CD4-positive, alpha-beta memory T cell (primary cell): ENCODE measurements at regions of chr2 and their contacts with region 1.

Region 1: DNA sequence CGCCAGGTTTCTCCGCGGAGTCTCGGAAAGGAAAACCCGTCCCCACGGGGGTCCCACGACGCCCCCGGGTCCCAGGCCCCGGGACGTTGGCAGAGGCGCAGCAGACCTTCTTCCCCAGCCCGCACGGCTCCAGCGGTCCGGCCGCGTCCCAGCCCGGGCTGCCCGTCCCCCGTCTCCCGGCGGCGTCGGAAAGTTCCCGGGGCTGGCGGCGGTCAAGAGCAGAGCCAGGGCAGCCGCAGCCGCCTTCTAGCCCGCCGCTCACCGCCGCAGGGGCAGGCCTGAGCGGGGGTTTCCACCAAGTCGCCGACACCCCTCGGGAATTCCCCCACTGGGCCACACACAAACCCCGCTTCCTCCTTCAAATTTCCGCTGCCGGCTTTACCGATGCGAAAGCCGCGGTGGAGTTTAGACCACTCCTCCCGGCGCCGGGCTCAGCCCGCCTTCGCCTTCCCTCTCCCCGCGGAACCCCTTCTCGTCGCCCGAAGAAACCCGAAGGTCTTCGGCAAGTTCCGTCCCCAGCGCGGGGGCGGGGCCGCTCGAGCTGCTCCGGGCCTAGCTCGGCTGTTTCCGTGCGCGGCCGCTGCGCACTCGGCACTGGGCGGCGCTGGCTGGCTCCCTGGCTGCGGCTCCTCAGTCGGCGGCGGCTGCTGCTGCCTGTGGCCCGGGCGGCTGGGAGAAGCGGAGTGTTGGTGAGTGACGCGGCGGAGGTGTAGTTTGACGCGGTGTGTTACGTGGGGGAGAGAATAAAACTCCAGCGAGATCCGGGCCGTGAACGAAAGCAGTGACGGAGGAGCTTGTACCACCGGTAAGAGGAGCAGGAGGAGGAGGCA is at the start of gene CREB1:
- DNase-seq: peak; percentile 99 to 100 (median 100)
- H3K4me3 ChIP-seq: peak within 1 kb of the TSS; percentile 86 to 89
- H3K4me3 Mint-ChIP-seq: peak within 1 kb of the TSS; percentile 96 to 99 (median 98)
- H3K27ac ChIP-seq: peak within 1 kb of the TSS; percentile 99
- H3K27ac Mint-ChIP-seq: peak within 1 kb of the TSS; percentile 98 to 100 (median 100)
- H3K4me1 ChIP-seq: peaks cover 75% of the 10 kb centered on the region
- H3K4me1 Mint-ChIP-seq: peaks cover 47 to 94% (median 59%) of the 10 kb centered on the region in 4 donors
- H3K27me3 ChIP-seq: no peaks in the 10 kb centered on the region
- H3K27me3 Mint-ChIP-seq: peaks cover 0 to 3% of the 10 kb centered on the region in 2 donors
- total RNA-seq, gene CREB1: 128 TPM

Region 2: GRCh38 chr2:206085742-206086445 is 1443.7 kb before region 1 on chr2 and contains the start of gene INO80D:
- CTCF ChIA-PET with region 1: no interaction called
- POLR2A ChIA-PET with region 1: interaction called, 7 read pairs
- intact Hi-C with region 1: loop called (anchors 5 kb)
- DNase-seq: peak; percentile 88 to 91 (median 89)
- H3K4me3 ChIP-seq: peak within 1 kb of the TSS; percentile 81 to 94
- H3K4me3 Mint-ChIP-seq: peak within 1 kb of the TSS; percentile 98 to 100 (median 99)
- H3K27ac ChIP-seq: peak within 1 kb of the TSS; percentile 98
- H3K27ac Mint-ChIP-seq: peak within 1 kb of the TSS; percentile 99 to 100 (median 100)
- H3K4me1 ChIP-seq: peaks cover 44% of the 10 kb centered on the region
- H3K4me1 Mint-ChIP-seq: peaks cover 24 to 54% (median 37%) of the 10 kb centered on the region in 4 donors
- H3K27me3 ChIP-seq: no peaks in the 10 kb centered on the region
- H3K27me3 Mint-ChIP-seq: no peaks in the 10 kb centered on the region
- total RNA-seq, gene INO80D: 40.2 to 41.3 TPM

Region 3: DNA sequence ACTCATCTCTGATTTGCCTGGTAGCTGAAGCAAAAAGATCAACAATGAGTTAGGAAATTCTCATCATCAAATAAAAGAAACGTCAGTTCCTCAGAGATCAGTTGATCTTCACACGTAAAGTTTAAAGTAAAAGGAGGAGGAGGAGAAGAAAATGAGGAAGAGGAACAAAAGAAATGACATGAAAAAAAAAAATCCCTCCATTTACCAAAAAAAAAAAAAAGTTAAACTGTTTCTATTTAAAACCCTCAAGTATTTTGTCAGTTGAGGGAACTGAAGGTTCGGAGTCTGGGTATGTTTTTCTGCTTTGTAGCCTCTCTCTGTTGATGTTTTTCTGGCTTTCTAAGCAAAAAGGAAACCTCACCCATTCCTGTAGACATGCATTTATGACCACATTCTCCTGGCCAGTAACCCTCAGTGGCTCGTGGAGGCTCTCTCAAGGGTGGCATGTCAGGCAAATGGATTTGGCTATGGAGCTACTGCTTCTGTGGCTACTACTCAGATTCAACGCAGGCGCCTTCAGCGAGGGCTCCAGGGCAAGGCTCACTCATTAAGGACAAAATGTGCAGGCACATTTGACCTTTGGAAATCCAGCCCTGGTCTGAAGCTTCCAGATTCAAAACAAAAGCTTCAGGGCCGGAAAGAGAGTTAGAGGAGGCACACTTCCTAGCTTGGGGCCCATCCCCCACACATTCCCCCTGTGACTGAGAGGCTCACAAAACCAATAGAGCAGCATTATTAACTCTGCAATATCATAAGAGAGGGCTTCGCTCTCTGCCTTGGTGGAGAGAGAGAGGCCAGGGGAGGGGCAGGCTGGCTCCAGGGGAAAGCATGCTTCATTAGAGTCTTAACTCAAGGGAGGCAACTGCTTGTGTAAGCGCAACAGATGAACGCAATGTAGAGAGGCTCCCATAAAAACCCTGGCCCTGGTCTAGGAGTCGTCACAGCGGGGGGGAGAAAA is 386.1 kb before region 1 on chr2:
- CTCF ChIA-PET with region 1: interaction called, 3 read pairs
- POLR2A ChIA-PET with region 1: interaction called, 11 read pairs
- intact Hi-C with region 1: no loop called
- DNase-seq: peak; percentile 74 to 85 (median 77)
- H3K4me3 ChIP-seq: peak overlapping the region in 1 of 2 donors; percentile 15
- H3K4me3 Mint-ChIP-seq: peak overlapping the region; percentile 66 to 84 (median 74)
- H3K27ac ChIP-seq: peak overlapping the region; percentile 69
- H3K27ac Mint-ChIP-seq: peak overlapping the region; percentile 84 to 96 (median 93)
- H3K4me1 ChIP-seq: peaks cover 58% of the 10 kb centered on the region
- H3K4me1 Mint-ChIP-seq: peaks cover 48 to 81% (median 67%) of the 10 kb centered on the region in 4 donors
- H3K27me3 ChIP-seq: no peaks in the 10 kb centered on the region
- H3K27me3 Mint-ChIP-seq: no peaks in the 10 kb centered on the region

Region 4: DNA sequence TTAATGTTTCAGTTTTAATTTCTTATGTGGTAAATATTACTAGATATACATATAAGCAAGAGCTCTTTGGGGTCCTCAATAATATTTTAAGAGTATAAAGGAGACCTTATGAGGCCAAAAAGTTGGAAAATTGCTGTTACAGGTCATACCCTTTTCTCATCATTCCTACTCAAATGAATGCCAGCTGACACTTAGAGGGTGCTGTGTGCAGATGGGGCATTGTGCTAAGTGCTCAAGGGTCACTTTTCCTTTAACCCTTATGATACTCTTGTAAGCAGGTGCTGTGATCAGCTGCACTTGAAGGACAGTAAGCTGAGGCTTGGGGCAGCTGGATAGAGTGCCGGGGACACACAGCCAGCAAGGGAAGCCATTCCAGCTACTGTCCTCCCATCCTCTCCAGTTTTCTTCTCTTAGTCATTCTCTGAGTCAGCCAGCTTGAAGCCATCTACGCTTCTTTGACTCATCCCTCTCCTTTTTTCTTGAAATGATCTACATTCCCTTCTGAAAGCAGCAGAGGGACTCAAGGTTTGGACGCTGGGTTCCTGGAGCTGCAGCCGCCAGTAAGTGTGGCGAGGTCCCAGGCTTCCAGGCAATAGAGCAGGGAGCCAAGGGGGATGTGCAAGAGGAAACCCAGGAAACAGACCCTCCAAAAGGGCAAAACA is 41.8 kb before region 1 on chr2:
- CTCF ChIA-PET with region 1: no interaction called
- POLR2A ChIA-PET with region 1: no interaction called
- intact Hi-C with region 1: no loop called
- DNase-seq: no peak
- H3K4me3 ChIP-seq: no peak overlapping the region
- H3K4me3 Mint-ChIP-seq: no peak overlapping the region
- H3K27ac ChIP-seq: no peak overlapping the region
- H3K27ac Mint-ChIP-seq: peak overlapping the region in 1 of 7 donors; percentile 57
- H3K4me1 ChIP-seq: no peaks in the 10 kb centered on the region
- H3K4me1 Mint-ChIP-seq: peaks cover 0 to 1% (median 0%) of the 10 kb centered on the region in 4 donors
- H3K27me3 ChIP-seq: no peaks in the 10 kb centered on the region
- H3K27me3 Mint-ChIP-seq: no peaks in the 10 kb centered on the region

Region 5: DNA sequence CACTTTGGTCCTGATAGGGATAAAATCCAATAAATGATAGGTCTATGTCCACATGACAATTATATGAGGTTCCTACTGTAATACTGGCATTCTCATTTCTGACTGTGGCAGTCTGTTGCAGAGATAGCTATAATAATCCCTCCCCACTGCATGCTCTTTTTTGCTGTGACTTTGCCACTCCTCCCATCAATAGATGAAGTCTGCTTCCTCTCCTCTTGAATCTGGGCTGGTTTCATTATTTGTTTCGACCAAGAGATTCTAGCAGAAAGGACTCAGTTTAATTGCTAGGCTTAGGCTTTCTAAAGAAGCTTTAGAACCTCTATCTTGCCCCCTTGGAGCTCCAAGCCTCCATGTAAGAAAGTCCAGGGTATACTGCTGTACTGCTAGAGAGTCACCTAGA is 23.1 kb before region 1 on chr2:
- CTCF ChIA-PET with region 1: interaction called, 5 read pairs
- POLR2A ChIA-PET with region 1: interaction called, 11 read pairs
- intact Hi-C with region 1: loop called (anchors 2 kb)
- DNase-seq: no peak
- H3K4me3 ChIP-seq: no peak overlapping the region
- H3K4me3 Mint-ChIP-seq: peak overlapping the region in 6 of 8 donors; percentile 17 to 69 (median 58)
- H3K27ac ChIP-seq: no peak overlapping the region
- H3K27ac Mint-ChIP-seq: peak overlapping the region in 4 of 7 donors; percentile 8 to 86 (median 48)
- H3K4me1 ChIP-seq: peaks cover 21% of the 10 kb centered on the region
- H3K4me1 Mint-ChIP-seq: peaks cover 19 to 41% (median 28%) of the 10 kb centered on the region in 4 donors
- H3K27me3 ChIP-seq: no peaks in the 10 kb centered on the region
- H3K27me3 Mint-ChIP-seq: no peaks in the 10 kb centered on the region

Region 6: GRCh38 chr2:207546822-207547221 is 17.3 kb after region 1 on chr2:
- CTCF ChIA-PET with region 1: interaction called, 5 read pairs
- POLR2A ChIA-PET with region 1: interaction called, 61 read pairs
- intact Hi-C with region 1: loop called (anchors 2 kb)
- DNase-seq: no peak
- H3K4me3 ChIP-seq: no peak overlapping the region
- H3K4me3 Mint-ChIP-seq: peak overlapping the region in 2 of 8 donors; percentile 4 to 35
- H3K27ac ChIP-seq: no peak overlapping the region
- H3K27ac Mint-ChIP-seq: no peak overlapping the region
- H3K4me1 ChIP-seq: peaks cover 57% of the 10 kb centered on the region
- H3K4me1 Mint-ChIP-seq: peaks cover 55 to 83% (median 69%) of the 10 kb centered on the region in 4 donors
- H3K27me3 ChIP-seq: no peaks in the 10 kb centered on the region
- H3K27me3 Mint-ChIP-seq: no peaks in the 10 kb centered on the region

Region 7: GRCh38 chr2:207662203-207662602 is 132.7 kb after region 1 on chr2:
- CTCF ChIA-PET with region 1: no interaction called
- POLR2A ChIA-PET with region 1: no interaction called
- intact Hi-C with region 1: no loop called
- DNase-seq: no peak
- H3K4me3 ChIP-seq: no peak overlapping the region
- H3K4me3 Mint-ChIP-seq: no peak overlapping the region
- H3K27ac ChIP-seq: no peak overlapping the region
- H3K27ac Mint-ChIP-seq: no peak overlapping the region
- H3K4me1 ChIP-seq: no peaks in the 10 kb centered on the region
- H3K4me1 Mint-ChIP-seq: no peaks in the 10 kb centered on the region
- H3K27me3 ChIP-seq: no peaks in the 10 kb centered on the region
- H3K27me3 Mint-ChIP-seq: no peaks in the 10 kb centered on the region

Region 8: DNA sequence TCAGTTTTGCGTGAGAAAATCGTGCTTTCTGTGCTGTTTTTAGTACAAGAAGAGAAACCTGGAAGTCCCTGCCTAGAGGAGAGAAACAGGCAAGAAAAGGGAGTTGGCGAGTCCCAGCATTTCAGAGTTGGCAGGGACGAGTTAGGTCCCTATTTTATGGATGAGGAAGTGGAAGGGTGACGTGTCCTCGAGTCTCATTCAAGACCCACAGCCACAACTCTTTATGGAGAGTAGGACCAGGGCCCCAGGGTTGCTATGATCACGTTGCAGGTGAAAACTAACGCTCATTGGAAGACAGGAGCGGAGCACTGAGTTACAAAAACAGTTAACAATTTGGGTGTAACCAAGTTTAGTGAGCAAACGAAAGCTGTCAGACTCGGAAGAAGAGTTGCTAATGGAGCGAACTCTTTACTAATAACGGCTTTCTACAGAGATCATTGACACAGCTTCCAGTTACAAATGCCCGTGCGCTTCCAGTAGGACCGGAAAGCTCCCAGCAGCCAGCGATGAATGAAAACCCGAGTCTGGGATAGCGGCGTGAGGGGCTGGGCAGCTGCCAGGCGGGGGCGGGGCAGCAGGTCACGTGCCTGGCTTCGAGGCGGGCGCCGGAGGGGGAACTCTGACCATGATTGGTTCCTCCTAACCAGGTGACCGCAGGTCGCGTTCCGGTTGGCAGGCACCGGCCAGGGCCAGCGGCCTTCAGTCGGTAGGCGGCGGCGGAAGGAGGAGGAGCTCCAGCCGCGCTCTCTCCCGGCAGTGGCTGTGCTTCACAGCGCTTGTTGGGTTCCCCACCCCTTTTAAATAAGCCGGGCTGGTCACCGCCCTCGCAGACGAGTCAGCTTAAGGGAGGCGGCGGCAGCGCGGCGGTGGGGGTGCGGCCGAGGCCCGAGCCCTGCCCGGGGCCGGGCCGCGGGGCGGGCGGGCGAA is 181.5 kb after region 1 on chr2 and contains the start of gene CCNYL1:
- CTCF ChIA-PET with region 1: no interaction called
- POLR2A ChIA-PET with region 1: interaction called, 49 read pairs
- intact Hi-C with region 1: loop called (anchors 1 kb)
- DNase-seq: peak; percentile 96 to 99 (median 98)
- H3K4me3 ChIP-seq: peak within 1 kb of the TSS; percentile 70 to 88
- H3K4me3 Mint-ChIP-seq: peak within 1 kb of the TSS; percentile 90 to 98 (median 96)
- H3K27ac ChIP-seq: peak within 1 kb of the TSS; percentile 73
- H3K27ac Mint-ChIP-seq: peak within 1 kb of the TSS; percentile 92 to 96 (median 94)
- H3K4me1 ChIP-seq: peaks cover 20% of the 10 kb centered on the region
- H3K4me1 Mint-ChIP-seq: peaks cover 14 to 37% (median 21%) of the 10 kb centered on the region in 4 donors
- H3K27me3 ChIP-seq: no peaks in the 10 kb centered on the region
- H3K27me3 Mint-ChIP-seq: peaks cover 0 to 1% of the 10 kb centered on the region in 2 donors
- total RNA-seq, gene CCNYL1: 9.7 to 10.5 TPM

Region 9: DNA sequence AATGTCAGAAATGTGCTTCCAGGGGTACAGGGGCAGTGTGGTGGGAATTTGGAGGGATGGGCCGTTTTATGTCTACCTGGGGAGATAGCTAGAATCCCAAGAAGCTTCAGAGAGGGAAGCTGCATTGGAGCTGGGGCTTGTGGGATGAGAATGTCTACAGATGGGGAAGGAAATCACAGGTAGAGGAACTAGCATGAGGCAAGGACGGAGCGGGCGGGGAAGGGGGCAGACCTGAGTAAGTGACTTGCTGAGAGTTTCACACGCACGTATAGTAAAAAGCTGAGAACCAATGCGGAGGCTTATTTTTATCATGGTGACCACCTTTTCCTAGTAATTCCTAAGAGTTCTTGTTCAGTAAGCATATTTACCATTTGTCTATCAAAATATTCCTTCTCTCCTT is 654.0 kb after region 1 on chr2:
- CTCF ChIA-PET with region 1: no interaction called
- POLR2A ChIA-PET with region 1: no interaction called
- intact Hi-C with region 1: no loop called
- DNase-seq: no peak
- H3K4me3 ChIP-seq: no peak overlapping the region
- H3K4me3 Mint-ChIP-seq: no peak overlapping the region
- H3K27ac ChIP-seq: no peak overlapping the region
- H3K27ac Mint-ChIP-seq: no peak overlapping the region
- H3K4me1 ChIP-seq: no peaks in the 10 kb centered on the region
- H3K4me1 Mint-ChIP-seq: no peaks in the 10 kb centered on the region
- H3K27me3 ChIP-seq: no peaks in the 10 kb centered on the region
- H3K27me3 Mint-ChIP-seq: peaks cover 5 to 11% of the 10 kb centered on the region in 2 donors